ENCODE measurements at regions of chr1 and their contacts with region 1.

Region 1: GRCh38 chr1:223228931-223229528 is 86.0 kb upstream of the TLR5 start:
- DNase-seq: no peak

Region 2: GRCh38 chr1:223269006-223269405 is 40.0 kb after region 1 on chr1:
- intact Hi-C with region 1: loop called in 1 of 2 experiments (anchors 1 kb)
- DNase-seq: no peak

Measured in posterior vena cava (tissue), 2 donors.